ENCODE measurements at regions of chr3 and their contacts with region 1.

Region 1: DNA sequence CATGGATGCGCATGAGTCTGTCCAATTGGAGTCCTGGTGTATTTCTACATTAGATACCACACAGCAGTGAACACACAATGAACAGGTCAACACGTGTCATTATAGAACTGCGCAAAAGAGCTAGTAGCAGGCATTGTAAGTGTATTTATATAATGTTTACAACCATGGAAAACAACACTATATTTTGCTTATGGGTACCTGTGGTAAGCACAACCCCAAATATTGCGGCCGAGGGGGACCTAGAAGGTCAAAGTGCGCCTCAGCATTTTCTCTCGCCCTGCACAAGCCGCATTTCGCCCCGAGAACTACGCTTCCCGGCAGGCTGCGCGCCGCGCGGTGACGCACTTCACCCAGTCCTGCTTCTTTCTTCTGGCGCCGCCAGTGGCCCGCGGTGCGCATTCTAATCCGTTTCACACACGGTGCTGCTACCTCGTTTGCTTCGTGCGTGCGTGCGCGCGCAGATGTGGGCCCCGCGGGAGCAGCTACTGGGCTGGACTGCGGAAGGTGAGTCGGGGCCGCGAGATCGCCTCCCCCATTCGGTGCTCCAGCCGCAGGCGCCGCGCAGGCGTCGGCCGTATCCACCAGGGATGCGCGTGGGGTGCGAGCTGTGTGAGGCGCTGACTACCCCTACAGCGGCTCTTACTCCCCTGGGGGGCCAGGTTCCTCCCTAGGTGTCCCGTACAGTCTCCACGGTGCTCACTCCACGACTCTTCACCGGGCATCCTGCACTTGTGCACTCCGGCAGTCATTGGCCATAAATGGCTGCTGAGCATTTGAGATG is at the start of gene ZNF589:
- DNase-seq: peak; percentile 96
- H3K4me3 ChIP-seq: peak within 1 kb of the TSS; percentile 72 to 94 (median 82)
- H3K27ac ChIP-seq: peak within 1 kb of the TSS; percentile 84
- H3K4me1 ChIP-seq: no peaks in the 10 kb centered on the region
- H3K27me3 ChIP-seq: no peaks in the 10 kb centered on the region
- CTCF ChIP-seq: peak; percentile 5 to 37
- POLR2A ChIP-seq: peak; percentile 93
- total RNA-seq, gene ZNF589: 12.4 and 13.4 TPM in 2 replicates

Region 2: DNA sequence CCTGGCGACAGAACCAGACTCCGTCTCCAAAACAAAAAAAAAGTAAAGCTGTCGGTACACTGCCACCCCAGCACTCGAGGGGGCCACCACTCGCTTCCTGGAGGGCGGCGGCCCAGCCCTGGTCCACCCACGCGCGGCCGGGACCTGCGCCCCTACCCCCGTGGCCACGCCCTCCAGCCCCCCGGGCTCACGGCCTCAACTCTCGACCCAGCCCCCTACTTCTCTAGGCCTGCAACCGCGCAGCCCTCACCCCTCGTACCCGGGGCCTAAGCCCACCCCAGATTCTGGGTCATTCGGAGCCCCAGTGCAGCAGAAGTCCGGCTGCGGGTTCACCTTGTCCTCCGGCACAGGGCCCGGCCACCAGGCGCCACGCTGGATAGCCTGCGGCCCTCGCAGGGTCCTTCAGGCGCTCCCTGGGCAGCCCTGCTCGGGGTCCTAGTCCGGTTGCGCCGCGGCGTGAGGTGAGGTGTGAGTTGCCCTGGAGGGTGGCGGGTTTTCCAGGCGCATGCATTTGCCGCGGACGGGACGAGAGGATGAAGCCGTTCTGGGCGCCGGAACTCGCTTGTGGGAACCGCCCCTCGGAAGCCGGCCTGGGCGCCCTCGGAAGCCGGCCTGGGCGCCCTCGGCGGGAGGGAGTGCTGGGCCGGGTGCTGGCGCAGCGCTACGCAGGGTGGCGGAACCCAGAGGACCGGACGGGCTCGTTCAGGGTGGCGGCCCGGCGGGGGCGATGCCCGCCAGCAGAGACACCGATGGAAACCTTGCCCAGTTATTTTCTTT is 60.3 kb after region 1 on chr3:
- CTCF ChIA-PET with region 1: no interaction called
- POLR2A ChIA-PET with region 1: no interaction called
- dilution Hi-C with region 1: no loop called
- intact Hi-C with region 1: loop called (anchors 1 kb)
- DNase-seq: peak; percentile 88
- H3K4me3 ChIP-seq: peak within 1 kb of the TSS; percentile 57 to 86 (median 65)
- H3K27ac ChIP-seq: peak within 1 kb of the TSS; percentile 51
- H3K4me1 ChIP-seq: peaks cover 8% of the 10 kb centered on the region
- H3K27me3 ChIP-seq: peaks cover 2 to 5% of the 10 kb centered on the region in 2 experiments
- CTCF ChIP-seq: no peak
- POLR2A ChIP-seq: no peak

Region 3: DNA sequence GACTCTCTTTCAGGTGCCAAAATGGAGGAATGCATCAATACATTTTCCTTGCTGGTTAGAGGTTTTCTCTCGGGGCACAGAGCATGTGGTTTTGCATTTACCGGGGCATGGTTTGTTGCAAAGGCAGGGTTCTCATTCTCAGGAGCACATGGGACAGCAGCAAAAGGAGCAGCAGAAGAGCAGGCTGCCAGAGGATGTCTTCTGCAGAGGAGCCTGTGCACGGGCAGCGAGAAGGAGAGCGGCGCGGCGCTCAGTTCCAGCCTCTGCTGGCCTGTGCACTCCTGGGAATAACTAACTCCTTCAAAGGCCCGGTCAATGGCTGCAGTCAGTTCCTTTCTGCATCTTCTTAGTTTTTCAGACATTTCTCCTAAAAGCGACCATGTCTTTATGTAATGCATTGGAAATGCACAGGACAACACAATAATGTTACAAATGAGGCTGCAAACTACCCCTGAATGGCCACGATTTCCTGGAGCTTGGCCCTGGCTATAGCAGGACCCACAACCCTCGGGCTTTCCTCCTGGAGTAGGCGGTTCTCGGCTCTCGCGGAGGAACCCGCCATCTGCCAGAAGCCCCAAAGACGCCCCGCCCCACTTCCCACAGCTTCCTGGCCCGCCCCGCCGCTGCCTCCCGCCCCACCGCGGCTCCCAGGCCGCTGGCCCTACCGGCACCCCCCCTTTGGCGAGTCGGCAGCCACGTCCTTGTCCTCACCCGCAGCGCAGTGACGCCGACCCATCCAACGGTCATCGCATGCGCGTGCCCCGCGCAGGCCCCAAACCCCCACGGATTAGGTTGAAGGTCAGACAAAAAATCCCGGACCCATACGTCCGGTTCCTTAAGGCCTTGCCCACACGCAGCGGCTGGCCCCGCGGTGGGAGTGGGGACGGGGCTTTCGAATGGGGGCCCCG is 1035.8 kb after region 1 on chr3 and contains the start of gene C3orf62:
- CTCF ChIA-PET with region 1: no interaction called
- POLR2A ChIA-PET with region 1: no interaction called
- dilution Hi-C with region 1: no loop called
- intact Hi-C with region 1: no loop called
- DNase-seq: peak; percentile 87
- H3K4me3 ChIP-seq: peak within 1 kb of the TSS; percentile 41 to 65 (median 53)
- H3K27ac ChIP-seq: peak within 1 kb of the TSS; percentile 88
- H3K4me1 ChIP-seq: peaks cover 18% of the 10 kb centered on the region
- H3K27me3 ChIP-seq: no peaks in the 10 kb centered on the region
- CTCF ChIP-seq: no peak
- POLR2A ChIP-seq: peak; percentile 77
- total RNA-seq, gene C3orf62: 3.9 and 5.6 TPM in 2 replicates

Measured in endothelial cell of umbilical vein (primary cell).